Activated CD4-positive, alpha-beta memory T cell treated with anti-CD3 and anti-CD28 coated beads for 36 hours (primary cell): ENCODE measurements at regions of chr5 and their contacts with region 1.

Region 1: GRCh38 chr5:170333161-170333910 is 35.8 kb upstream of the LCP2 start:
- DNase-seq: peak; percentile 86
- H3K4me3 Mint-ChIP-seq: peak overlapping the region; percentile 66
- H3K27ac Mint-ChIP-seq: no peak overlapping the region
- H3K4me1 Mint-ChIP-seq: peaks cover 62% of the 10 kb centered on the region
- H3K27me3 Mint-ChIP-seq: no peaks in the 10 kb centered on the region

Region 2: DNA sequence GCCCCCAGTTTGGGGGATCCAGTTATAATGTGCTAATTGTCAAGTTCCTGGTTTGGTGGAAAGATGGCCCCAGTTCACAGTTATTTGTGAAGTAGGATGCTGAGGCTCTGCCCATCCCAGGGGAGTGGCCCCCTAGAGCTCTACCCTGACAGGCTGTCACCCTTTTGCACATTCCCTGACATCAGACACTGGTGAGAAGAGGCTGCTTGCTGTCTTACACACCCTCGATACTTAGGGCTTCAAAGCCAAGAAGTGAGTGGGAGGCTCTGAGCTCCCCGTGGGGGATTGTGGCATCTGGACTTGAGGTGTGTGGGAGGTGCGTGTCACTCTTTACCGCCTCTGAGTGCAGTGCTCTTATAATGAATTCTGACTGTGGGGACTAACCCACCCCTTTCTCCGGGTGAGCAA is 527.8 kb before region 1 on chr5:
- CTCF ChIA-PET with region 1: no interaction called
- POLR2A ChIA-PET with region 1: no interaction called
- intact Hi-C with region 1: loop called (anchors 5 kb)
- DNase-seq: peak; percentile 83
- H3K4me3 Mint-ChIP-seq: peak overlapping the region; percentile 39
- H3K27ac Mint-ChIP-seq: peak overlapping the region; percentile 87
- H3K4me1 Mint-ChIP-seq: peaks cover 57% of the 10 kb centered on the region
- H3K27me3 Mint-ChIP-seq: no peaks in the 10 kb centered on the region

Region 3: DNA sequence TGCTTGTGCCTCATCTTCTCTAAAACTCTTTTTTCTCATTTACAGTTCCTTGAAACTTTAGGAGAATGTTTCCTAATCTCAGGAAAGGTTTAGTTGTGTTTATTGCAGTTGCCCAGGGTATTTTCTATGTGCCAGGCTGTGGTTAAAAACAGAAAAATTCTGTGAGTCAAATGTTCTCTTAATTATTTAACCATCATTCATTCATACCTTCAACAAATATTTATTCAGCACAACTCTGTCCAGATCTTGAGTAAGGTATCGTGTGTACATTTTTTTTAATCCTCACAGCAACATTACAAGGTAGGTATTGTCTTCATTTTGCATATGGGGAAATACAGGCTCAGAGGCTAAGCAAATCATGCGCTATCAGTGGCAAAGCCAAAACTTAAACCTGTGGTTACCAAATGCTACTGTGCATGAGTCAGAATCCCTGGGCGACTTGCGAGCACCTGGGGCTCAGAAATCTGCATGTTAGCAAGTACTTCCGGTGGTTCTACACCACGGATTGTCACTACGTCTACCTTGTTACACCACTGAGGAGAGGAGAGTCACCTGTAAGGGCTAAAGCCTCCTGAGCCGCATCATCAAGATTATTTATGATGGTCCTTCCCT is 79.4 kb before region 1 on chr5:
- CTCF ChIA-PET with region 1: interaction called, 15 read pairs
- POLR2A ChIA-PET with region 1: interaction called, 3 read pairs
- intact Hi-C with region 1: loop called (anchors 1 kb)
- DNase-seq: peak; percentile 80
- H3K4me3 Mint-ChIP-seq: no peak overlapping the region
- H3K27ac Mint-ChIP-seq: peak overlapping the region; percentile 73
- H3K4me1 Mint-ChIP-seq: peaks cover 57% of the 10 kb centered on the region
- H3K27me3 Mint-ChIP-seq: no peaks in the 10 kb centered on the region

Region 4: GRCh38 chr5:170278611-170279452 is 54.5 kb before region 1 on chr5:
- CTCF ChIA-PET with region 1: interaction called, 290 read pairs
- POLR2A ChIA-PET with region 1: interaction called, 36 read pairs
- intact Hi-C with region 1: loop called (anchors 1 kb)
- DNase-seq: peak; percentile 93
- H3K4me3 Mint-ChIP-seq: peak overlapping the region; percentile 40
- H3K27ac Mint-ChIP-seq: peak overlapping the region; percentile 95
- H3K4me1 Mint-ChIP-seq: peaks cover 94% of the 10 kb centered on the region
- H3K27me3 Mint-ChIP-seq: no peaks in the 10 kb centered on the region

Region 5: DNA sequence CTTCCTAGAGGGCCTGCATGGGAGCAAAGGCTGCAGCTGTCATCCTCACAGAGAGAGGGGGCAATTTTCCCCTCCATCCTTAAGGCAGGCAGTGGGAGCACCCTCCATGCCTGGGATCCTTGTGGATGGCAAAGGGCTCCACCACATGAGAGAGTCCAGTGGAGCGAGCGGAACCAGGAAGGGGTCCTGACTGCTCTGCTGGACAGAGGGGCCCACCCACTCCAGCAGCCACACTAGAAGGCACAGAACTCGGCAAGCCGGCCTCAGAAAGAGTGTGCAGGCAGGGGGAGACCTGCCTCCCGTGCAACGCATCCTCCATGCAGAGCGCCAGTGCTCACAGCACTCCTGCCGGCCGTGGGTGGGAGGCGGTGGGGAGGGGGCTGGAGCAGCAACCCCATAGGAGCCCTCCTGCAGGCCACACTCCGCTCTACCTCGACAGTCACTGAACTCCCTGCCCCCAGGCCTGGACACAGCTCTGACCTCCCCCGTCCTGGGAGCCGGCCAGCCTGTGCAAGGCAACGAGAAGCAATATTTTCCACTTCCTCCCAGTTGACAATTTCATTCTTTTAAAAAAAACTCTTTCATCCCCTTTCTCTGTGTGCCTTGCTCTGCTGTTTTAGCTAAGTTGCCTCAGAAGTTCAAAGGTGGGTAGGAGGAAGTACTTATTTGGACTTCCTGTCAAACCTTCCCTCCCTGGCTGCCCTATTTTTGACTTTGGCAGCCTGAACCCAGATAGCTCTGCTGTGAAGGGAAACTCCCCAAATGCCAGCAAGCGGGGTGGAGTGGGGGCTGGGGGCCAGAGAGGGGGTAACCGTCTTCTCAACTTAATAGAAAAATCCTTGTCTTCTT is 30.5 kb before region 1 on chr5:
- CTCF ChIA-PET with region 1: interaction called, 111 read pairs
- POLR2A ChIA-PET with region 1: interaction called, 144 read pairs
- intact Hi-C with region 1: loop called (anchors 1 kb)
- DNase-seq: peak; percentile 72
- H3K4me3 Mint-ChIP-seq: peak overlapping the region; percentile 74
- H3K27ac Mint-ChIP-seq: peak overlapping the region; percentile 93
- H3K4me1 Mint-ChIP-seq: peaks cover 84% of the 10 kb centered on the region
- H3K27me3 Mint-ChIP-seq: no peaks in the 10 kb centered on the region

Region 6: DNA sequence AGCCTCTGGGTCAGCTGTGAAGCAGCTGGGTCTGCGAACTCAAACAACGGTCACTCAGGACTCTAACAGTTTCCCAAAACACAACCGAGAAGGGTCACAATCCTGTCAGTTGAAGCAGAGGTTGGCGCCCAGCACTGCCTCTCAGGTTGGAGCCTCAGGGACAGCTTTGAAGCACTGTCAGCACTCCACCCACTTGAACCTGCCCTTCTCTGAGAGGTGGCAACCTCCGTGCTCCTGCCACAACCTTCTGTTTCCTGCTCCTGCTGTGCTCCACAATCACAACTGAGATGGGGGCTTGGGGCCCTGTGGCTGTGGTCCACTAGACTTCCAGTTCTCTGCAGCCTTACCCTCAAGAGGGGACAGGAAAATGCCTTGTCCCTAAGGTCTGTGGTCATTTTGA is 14.0 kb before region 1 on chr5:
- CTCF ChIA-PET with region 1: interaction called, 24 read pairs
- POLR2A ChIA-PET with region 1: interaction called, 11 read pairs
- intact Hi-C with region 1: no loop called
- DNase-seq: no peak
- H3K4me3 Mint-ChIP-seq: no peak overlapping the region
- H3K27ac Mint-ChIP-seq: no peak overlapping the region
- H3K4me1 Mint-ChIP-seq: peaks cover 15% of the 10 kb centered on the region
- H3K27me3 Mint-ChIP-seq: no peaks in the 10 kb centered on the region

Region 7: GRCh38 chr5:170444969-170445505 is 111.7 kb after region 1 on chr5:
- CTCF ChIA-PET with region 1: no interaction called
- POLR2A ChIA-PET with region 1: no interaction called
- intact Hi-C with region 1: no loop called
- DNase-seq: no peak
- H3K4me3 Mint-ChIP-seq: no peak overlapping the region
- H3K27ac Mint-ChIP-seq: no peak overlapping the region
- H3K4me1 Mint-ChIP-seq: peaks cover 6% of the 10 kb centered on the region
- H3K27me3 Mint-ChIP-seq: peaks cover 3% of the 10 kb centered on the region